ENCODE measurements at regions of chr2 and their contacts with region 1.

Region 1: DNA sequence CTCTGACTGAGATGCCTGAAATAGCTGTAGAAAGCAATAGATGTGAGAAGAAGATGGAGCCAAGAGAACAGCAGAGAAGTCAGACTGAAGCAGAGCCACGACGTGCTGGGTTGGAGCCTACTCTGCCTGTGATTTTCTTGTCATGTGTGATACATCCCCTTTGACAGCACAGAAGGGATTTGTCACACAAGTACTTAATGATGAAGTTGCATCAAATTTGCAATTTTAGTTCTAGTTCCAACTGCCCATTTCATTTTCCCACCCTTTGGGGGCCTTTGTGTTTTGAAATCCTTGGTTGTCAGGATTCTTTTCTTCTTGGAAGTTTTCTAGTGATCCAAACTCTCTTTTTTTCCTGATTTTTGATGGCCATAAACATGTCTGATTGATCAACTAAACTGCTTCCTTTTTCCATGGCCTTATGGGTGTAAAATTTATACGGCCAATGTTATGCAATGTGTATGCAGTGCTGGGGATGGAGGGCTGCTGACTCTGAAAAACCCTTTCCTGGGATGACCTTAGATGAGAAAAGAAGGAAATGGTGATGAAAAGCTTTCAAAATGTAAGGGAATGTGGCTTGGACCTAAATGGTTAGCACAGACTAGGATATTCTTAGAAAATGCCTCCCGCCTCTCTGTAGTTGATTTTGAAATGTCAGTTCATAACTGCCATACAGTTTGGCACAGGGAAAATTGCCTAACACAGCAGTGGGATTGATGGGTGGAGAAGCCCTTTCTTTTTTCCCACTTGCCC is 9.6 kb upstream of the B3GNT2 start:
- DNase-seq: no peak
- ATAC-seq: peak; percentile 40

Region 2: GRCh38 chr2:62149708-62150107 is 36.6 kb before region 1 on chr2:
- intact Hi-C with region 1: loop called (anchors 5 kb)
- DNase-seq: no peak
- ATAC-seq: peak; percentile 27